Dendritic cell treated with granulocyte-macrophage colony-stimulating factor and Interleukin-4, amounts not matched to agents 40 ng/mL and 50 ng/mL, for 4 days (primary cell): ENCODE measurements at regions of chr17 and their contacts with region 1.

Region 1: GRCh38 chr17:48944519-48945260 is at the start of gene SNF8:
- H3K4me3 Mint-ChIP-seq: peak within 1 kb of the TSS; percentile 98
- H3K27ac Mint-ChIP-seq: peak within 1 kb of the TSS; percentile 92
- H3K4me1 Mint-ChIP-seq: peaks cover 19% of the 10 kb centered on the region
- H3K27me3 Mint-ChIP-seq: peaks cover 17% of the 10 kb centered on the region

Region 2: DNA sequence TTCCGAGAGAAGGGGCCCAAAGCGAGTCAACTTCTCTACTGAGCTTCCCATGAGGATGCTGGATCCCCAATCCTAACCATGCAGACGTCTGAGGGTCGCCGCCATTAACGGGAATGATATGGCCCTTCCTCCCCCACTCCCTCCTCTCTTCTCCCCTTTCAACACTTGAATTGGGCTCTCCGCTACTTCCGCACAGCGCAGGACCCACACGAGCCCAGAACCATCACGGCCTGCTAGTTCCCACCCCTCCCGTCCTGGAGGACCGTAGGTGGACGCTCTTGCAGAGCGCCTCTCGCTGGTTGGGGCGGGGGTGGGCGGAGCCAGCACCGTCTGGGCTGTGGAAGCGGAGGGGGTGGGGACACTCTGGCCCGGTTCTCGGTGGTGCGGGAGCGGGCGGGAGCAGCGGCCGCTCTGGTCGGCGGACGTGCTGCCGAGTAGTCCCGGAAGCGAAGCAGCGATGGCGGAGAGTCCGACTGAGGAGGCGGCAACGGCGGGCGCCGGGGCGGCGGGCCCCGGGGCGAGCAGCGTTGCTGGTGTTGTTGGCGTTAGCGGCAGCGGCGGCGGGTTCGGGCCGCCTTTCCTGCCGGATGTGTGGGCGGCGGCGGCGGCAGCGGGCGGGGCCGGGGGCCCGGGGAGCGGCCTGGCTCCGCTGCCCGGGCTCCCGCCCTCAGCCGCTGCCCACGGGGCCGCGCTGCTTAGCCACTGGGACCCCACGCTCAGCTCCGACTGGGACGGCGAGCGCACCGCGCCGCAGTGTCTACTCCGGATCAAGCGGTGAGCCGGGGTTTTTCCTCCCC is 36.4 kb before region 1 on chr17 and contains the start of gene UBE2Z:
- intact Hi-C with region 1: loop called (anchors 2 kb)
- H3K4me3 Mint-ChIP-seq: peak within 1 kb of the TSS; percentile 92
- H3K27ac Mint-ChIP-seq: peak within 1 kb of the TSS; percentile 95
- H3K4me1 Mint-ChIP-seq: peaks cover 58% of the 10 kb centered on the region
- H3K27me3 Mint-ChIP-seq: no peaks in the 10 kb centered on the region